Heart right ventricle (tissue), 16 donors: ENCODE measurements at regions of chr12 and their contacts with region 1.

Region 1: GRCh38 chr12:98516184-98516873 is 939 bp downstream of the TMPO start:
- DNase-seq: peak; percentile 42 to 80
- ATAC-seq: peak; percentile 21 to 67 (median 56)
- H3K4me3 ChIP-seq: peak overlapping the region; percentile 70 to 98 (median 90)
- H3K27ac ChIP-seq: peak overlapping the region; percentile 87 to 98 (median 96)
- H3K4me1 ChIP-seq: peaks cover 0 to 58% (median 33%) of the 10 kb centered on the region in 9 donors
- H3K27me3 ChIP-seq: no peaks in the 10 kb centered on the region
- CTCF ChIP-seq: peak; percentile 53 to 88 (median 76)

Region 2: DNA sequence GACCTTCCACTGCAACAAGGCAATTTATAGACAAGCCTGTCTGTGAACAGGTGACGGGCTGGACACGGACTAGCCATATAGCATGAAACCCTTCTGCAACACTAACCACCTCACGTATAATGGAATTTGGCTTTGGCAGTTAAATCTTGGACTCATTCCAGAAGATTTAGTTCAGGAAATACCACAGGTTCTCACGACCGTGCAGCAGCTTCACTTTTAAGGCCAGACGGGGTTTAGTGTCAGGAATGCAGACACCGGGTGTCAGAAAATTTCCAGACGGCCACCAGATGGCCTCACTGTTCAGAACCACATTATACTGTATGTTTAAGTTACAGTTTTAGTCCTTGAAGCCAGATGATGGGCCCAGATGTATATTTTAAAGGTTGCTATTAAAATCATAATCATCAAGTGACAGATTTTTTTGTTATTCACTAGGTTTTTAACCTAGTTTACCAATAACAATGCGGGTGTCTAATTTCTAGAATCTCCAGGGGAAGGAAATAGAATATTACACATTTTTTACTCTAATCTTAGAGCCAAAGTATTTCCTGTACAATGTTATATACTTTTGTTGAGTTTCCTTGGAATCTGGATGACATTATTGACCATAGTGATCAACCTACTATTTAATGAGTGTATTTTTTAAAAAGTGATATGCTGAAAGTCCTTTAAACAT is 91.5 kb before region 1 on chr12:
- intact Hi-C with region 1: loop called (anchors 1 to 10 kb)
- DNase-seq: peak; percentile 39 to 40
- ATAC-seq: peak in 7 of 8 donors; percentile 52 to 81 (median 77)
- H3K4me3 ChIP-seq: no peak overlapping the region
- H3K27ac ChIP-seq: peak overlapping the region in 2 of 10 donors; percentile 5 to 9
- H3K4me1 ChIP-seq: peaks cover 0 to 14% (median 4%) of the 10 kb centered on the region in 9 donors
- H3K27me3 ChIP-seq: no peaks in the 10 kb centered on the region
- CTCF ChIP-seq: peak; percentile 39 to 81 (median 70)

Region 3: GRCh38 chr12:98490501-98491453 is 25.6 kb before region 1 on chr12:
- intact Hi-C with region 1: loop called in 9 of 10 experiments (anchors 1 to 2 kb)
- DNase-seq: peak; percentile 79 to 88
- ATAC-seq: peak; percentile 75 to 93 (median 91)
- H3K4me3 ChIP-seq: peak overlapping the region in 5 of 10 donors; percentile 6 to 25 (median 16)
- H3K27ac ChIP-seq: peak overlapping the region in 8 of 10 donors; percentile 20 to 73 (median 58)
- H3K4me1 ChIP-seq: peaks cover 0 to 18% (median 10%) of the 10 kb centered on the region in 9 donors
- H3K27me3 ChIP-seq: no peaks in the 10 kb centered on the region
- CTCF ChIP-seq: peak; percentile 86 to 94 (median 87)

Region 4: DNA sequence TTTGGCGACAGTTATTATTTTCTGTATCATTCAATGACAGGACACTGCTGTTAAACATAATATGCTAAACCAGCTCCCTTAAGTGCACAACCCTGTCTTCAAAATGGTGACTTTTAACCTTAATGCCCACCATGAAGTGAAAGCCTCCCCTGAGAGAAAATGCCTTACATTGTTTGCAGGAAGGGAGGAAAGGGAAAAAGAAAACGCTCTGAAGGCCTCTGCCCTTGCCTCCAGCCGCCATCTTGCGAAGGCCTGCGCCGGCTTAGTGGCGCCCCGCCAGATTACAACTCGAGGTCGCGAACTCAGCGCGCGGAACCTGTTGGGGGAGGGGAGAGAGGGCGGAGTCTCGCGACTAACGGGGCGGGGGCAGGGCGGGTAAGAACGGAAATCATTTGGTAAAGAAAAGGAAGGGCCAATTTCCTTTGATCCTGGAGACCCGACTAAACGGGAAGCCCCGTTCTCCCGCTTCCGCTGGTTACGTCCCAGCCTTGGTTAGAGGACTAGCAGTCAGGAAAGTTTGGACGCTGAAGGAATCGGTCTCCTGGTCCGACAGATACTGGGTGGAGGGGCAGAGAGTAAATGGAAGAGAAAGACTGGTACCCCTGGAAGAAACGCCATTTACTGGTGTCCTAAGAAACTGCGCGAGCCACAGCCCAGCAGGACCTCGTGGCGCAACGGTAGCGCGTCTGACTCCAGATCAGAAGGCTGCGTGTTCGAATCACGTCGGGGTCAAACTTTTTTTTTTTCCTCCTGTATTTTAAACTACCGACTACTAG is 12.5 kb before region 1 on chr12:
- intact Hi-C with region 1: loop called in 3 of 10 experiments (anchors 1 kb)
- DNase-seq: peak; percentile 93 to 96
- ATAC-seq: peak; percentile 92 to 97 (median 96)
- H3K4me3 ChIP-seq: peak overlapping the region; percentile 39 to 71 (median 62)
- H3K27ac ChIP-seq: peak overlapping the region; percentile 87 to 98 (median 96)
- H3K4me1 ChIP-seq: peaks cover 0 to 15% (median 0%) of the 10 kb centered on the region in 9 donors
- H3K27me3 ChIP-seq: no peaks in the 10 kb centered on the region
- CTCF ChIP-seq: no peak